Gastrocnemius medialis (tissue), 4 donors: ENCODE measurements at regions of chr20 and their contacts with region 1.

Region 1: GRCh38 chr20:2101865-2102584 is 398 bp downstream of the STK35 start:
- DNase-seq: peak; percentile 88 to 91
- ATAC-seq: peak; percentile 88 to 89
- H3K4me3 ChIP-seq: peak overlapping the region; percentile 72 to 92 (median 90)
- H3K27ac ChIP-seq: peak overlapping the region; percentile 94 to 99 (median 96)
- H3K4me1 ChIP-seq: peaks cover 40 to 42% of the 10 kb centered on the region in 2 donors
- H3K27me3 ChIP-seq: no peaks in the 10 kb centered on the region
- CTCF ChIP-seq: no peak
- POLR2A ChIP-seq: peak; percentile 53 to 54

Region 2: DNA sequence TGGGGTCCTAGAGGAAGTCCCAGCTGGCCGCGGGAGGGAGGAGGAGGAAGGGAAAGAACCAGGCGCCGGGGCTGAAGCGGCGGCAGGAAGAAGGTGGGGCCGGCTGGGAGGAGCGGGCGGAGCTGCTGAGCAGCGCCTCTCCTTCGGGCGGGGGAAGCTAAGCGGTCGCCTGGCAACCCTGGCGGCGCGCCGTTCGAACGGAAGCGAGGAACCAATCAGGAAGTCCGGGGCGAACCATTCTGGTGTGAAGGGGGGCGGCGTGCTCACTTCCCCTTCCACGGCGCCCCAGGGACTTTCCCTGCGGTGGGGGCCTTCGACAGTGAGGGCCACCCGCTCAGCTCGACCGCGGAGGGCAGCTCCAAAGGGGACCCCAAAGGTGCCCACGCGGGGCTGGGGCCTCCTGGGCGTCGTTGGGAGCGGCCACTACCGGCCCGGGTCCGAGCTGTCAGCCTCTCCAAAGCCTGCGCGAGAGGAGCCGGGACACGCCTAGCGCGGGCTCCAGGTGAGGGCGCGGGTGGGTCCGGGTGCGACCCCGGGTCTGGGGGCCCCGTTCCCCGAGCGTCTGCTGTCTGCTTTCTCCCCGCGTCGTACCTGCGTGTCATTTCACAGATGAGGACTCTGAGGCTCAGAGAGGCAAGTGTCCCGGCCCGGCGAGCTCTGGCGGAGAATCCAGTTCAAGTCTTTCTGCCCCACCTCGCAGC is 1268.4 kb before region 1 on chr20 and contains the start of gene FAM110A:
- in situ Hi-C with region 1: no loop called
- intact Hi-C with region 1: loop called (anchors 10 kb)
- DNase-seq: peak; percentile 91 to 95
- ATAC-seq: peak; percentile 92 to 96
- H3K4me3 ChIP-seq: peak within 1 kb of the TSS; percentile 75 to 90 (median 83)
- H3K27ac ChIP-seq: peak within 1 kb of the TSS; percentile 82 to 86 (median 84)
- H3K4me1 ChIP-seq: peaks cover 32% of the 10 kb centered on the region in 2 donors
- H3K27me3 ChIP-seq: no peaks in the 10 kb centered on the region
- CTCF ChIP-seq: no peak
- POLR2A ChIP-seq: no peak
- total RNA-seq, gene FAM110A: 0.25 to 6.2 (median 1.9) TPM

Region 3: GRCh38 chr20:1803061-1803931 is 298.7 kb before region 1 on chr20:
- in situ Hi-C with region 1: no loop called
- intact Hi-C with region 1: no loop called
- DNase-seq: peak in 1 of 2 donors; percentile 28
- ATAC-seq: peak; percentile 20 to 57
- H3K4me3 ChIP-seq: peak overlapping the region; percentile 50 to 63 (median 58)
- H3K27ac ChIP-seq: peak overlapping the region in 3 of 4 donors; percentile 30 to 63 (median 38)
- H3K4me1 ChIP-seq: peaks cover 12 to 23% of the 10 kb centered on the region in 2 donors
- H3K27me3 ChIP-seq: no peaks in the 10 kb centered on the region
- CTCF ChIP-seq: no peak
- POLR2A ChIP-seq: peak in 1 of 2 donors; percentile 36

Region 4: DNA sequence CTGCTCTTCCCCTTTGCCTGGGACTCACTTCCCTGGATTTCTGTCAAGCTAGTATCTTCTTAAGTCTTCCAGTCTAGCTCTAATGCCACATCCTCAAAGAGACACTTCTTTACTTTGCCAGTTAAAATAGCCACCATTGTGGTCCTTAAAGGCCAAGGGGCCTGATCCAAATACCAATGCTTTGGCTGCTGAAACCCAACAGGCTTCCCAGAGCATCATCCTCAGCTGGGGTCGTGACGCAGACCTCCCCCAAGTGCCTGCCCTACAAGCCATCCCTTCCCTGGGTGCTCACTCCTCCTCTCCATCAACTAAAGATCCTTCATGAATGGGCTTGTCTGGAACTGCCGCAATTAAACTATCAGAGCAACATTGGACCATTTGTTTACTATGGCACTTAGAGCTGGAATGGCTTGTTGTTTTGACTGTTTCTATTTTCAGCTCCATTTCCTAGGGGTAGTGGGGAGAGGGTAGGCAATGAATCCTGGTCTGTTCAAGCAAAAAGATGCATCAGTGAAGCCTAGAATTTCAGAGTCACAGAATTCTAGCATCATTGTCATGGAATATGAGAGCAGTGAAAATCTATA is 286.4 kb before region 1 on chr20:
- in situ Hi-C with region 1: no loop called
- intact Hi-C with region 1: loop called (anchors 1 kb)
- DNase-seq: no peak
- ATAC-seq: no peak
- H3K4me3 ChIP-seq: no peak overlapping the region
- H3K27ac ChIP-seq: peak overlapping the region; percentile 9 to 69 (median 50)
- H3K4me1 ChIP-seq: peaks cover 63 to 67% of the 10 kb centered on the region in 2 donors
- H3K27me3 ChIP-seq: no peaks in the 10 kb centered on the region
- CTCF ChIP-seq: no peak
- POLR2A ChIP-seq: no peak

Region 5: GRCh38 chr20:2140561-2140960 is 38.5 kb after region 1 on chr20:
- in situ Hi-C with region 1: no loop called
- intact Hi-C with region 1: loop called (anchors 2 kb)
- DNase-seq: peak; percentile 82 to 92
- ATAC-seq: peak; percentile 97
- H3K4me3 ChIP-seq: no peak overlapping the region
- H3K27ac ChIP-seq: peak overlapping the region; percentile 71 to 83 (median 77)
- H3K4me1 ChIP-seq: peaks cover 39 to 51% of the 10 kb centered on the region in 2 donors
- H3K27me3 ChIP-seq: no peaks in the 10 kb centered on the region
- CTCF ChIP-seq: no peak
- POLR2A ChIP-seq: no peak

Region 6: GRCh38 chr20:2470423-2471193 is 368.6 kb after region 1 on chr20 and contains the start of gene SNRPB:
- in situ Hi-C with region 1: no loop called
- intact Hi-C with region 1: loop called (anchors 1 kb)
- DNase-seq: peak; percentile 96 to 97
- ATAC-seq: peak; percentile 98 to 99
- H3K4me3 ChIP-seq: peak within 1 kb of the TSS; percentile 77 to 95 (median 84)
- H3K27ac ChIP-seq: peak within 1 kb of the TSS; percentile 86 to 95 (median 88)
- H3K4me1 ChIP-seq: peaks cover 12 to 15% of the 10 kb centered on the region in 2 donors
- H3K27me3 ChIP-seq: no peaks in the 10 kb centered on the region
- CTCF ChIP-seq: no peak
- POLR2A ChIP-seq: peak; percentile 86 to 96
- total RNA-seq, gene SNRPB: 131 to 209 (median 190) TPM

Region 7: GRCh38 chr20:3407771-3408637 is 1306.0 kb after region 1 on chr20:
- in situ Hi-C with region 1: no loop called
- intact Hi-C with region 1: loop called (anchors 5 kb)
- DNase-seq: peak; percentile 28 to 54
- ATAC-seq: peak; percentile 67 to 74
- H3K4me3 ChIP-seq: peak overlapping the region; percentile 68 to 86 (median 78)
- H3K27ac ChIP-seq: peak overlapping the region; percentile 81 to 89 (median 83)
- H3K4me1 ChIP-seq: peaks cover 4 to 11% of the 10 kb centered on the region in 2 donors
- H3K27me3 ChIP-seq: no peaks in the 10 kb centered on the region
- CTCF ChIP-seq: no peak
- POLR2A ChIP-seq: peak; percentile 32 to 44